ENCODE measurements at regions of chr2 and their contacts with region 1.

Region 1: GRCh38 chr2:16608661-16609643 is 56.7 kb downstream of the CYRIA start:
- DNase-seq: peak; percentile 74 to 79
- ATAC-seq: peak; percentile 91 to 96
- H3K4me3 ChIP-seq: peak overlapping the region; percentile 48
- H3K27ac ChIP-seq: peak overlapping the region; percentile 37 to 57; a peak in 3 of 6 replicates
- H3K4me1 ChIP-seq: no peaks in the 10 kb centered on the region
- CTCF ChIP-seq: peak; percentile 68
- EP300 ChIP-seq: no peak
- POLR2A ChIP-seq: no peak
- RAD21 ChIP-seq: peak; percentile 72 to 84

Region 2: DNA sequence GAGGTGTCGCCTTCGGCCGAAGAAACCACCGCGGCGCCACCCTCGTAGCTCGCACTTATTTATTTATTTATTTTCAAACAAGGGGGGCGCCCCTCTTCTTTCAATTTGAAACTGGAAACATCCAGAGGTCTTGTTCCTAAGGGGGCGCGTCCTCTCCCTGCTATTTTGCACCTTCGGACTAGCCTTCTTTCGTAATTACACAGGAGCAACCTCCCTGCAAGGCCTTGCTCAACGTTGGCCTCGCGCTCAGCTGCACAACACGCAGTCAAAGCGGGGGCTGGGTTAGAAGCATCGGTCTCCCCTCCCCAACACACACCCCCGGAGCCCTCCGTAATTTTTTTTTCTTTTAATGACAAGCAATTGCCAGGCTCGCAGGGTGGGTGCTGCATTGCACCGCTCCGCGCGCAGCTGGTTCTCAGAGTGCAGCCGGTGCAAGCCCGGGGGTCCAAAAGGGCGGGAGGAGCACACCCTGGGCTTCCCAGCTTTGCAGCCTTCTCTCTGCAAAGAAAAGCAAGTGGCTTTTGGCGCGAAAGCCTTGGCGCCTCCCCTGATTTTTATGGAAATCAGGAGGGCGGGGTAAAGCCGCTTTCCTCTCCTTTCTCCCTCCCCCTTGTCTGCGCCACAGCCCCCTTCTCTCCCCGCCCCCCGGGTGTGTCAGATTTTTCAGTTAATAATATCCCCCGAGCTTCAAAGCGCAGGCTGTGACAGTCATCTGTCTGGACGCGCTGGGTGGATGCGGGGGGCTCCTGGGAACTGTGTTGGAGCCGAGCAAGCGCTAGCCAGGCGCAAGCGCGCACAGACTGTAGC is 668.9 kb before region 1 on chr2 and contains the start of gene MYCN:
- CTCF ChIA-PET with region 1: interaction called, 13 read pairs
- POLR2A ChIA-PET with region 1: no interaction called
- DNase-seq: peak; percentile 44 to 72
- ATAC-seq: peak; percentile 46 to 61
- H3K4me3 ChIP-seq: peak within 1 kb of the TSS; percentile 37
- H3K27ac ChIP-seq: no peak within 1 kb of the TSS
- H3K4me1 ChIP-seq: peaks cover 24% of the 10 kb centered on the region
- CTCF ChIP-seq: peak; percentile 88
- EP300 ChIP-seq: no peak
- POLR2A ChIP-seq: no peak
- RAD21 ChIP-seq: peak; percentile 88 to 95
- polyA plus RNA-seq, gene MYCN: not detected in 2 replicates

Region 3: GRCh38 chr2:16454621-16455020 is 154.3 kb before region 1 on chr2:
- CTCF ChIA-PET with region 1: no interaction called
- POLR2A ChIA-PET with region 1: no interaction called
- DNase-seq: no peak
- ATAC-seq: no peak
- H3K4me3 ChIP-seq: no peak overlapping the region
- H3K27ac ChIP-seq: no peak overlapping the region
- H3K4me1 ChIP-seq: no peaks in the 10 kb centered on the region
- CTCF ChIP-seq: no peak
- EP300 ChIP-seq: no peak
- POLR2A ChIP-seq: no peak
- RAD21 ChIP-seq: no peak

Region 4: GRCh38 chr2:16581241-16581640 is 27.7 kb before region 1 on chr2:
- CTCF ChIA-PET with region 1: interaction called, 11 read pairs
- POLR2A ChIA-PET with region 1: no interaction called
- DNase-seq: no peak
- ATAC-seq: no peak
- H3K4me3 ChIP-seq: no peak overlapping the region
- H3K27ac ChIP-seq: no peak overlapping the region
- H3K4me1 ChIP-seq: no peaks in the 10 kb centered on the region
- CTCF ChIP-seq: no peak
- EP300 ChIP-seq: no peak
- POLR2A ChIP-seq: no peak
- RAD21 ChIP-seq: no peak

Region 5: GRCh38 chr2:16623031-16623430 is 14.1 kb after region 1 on chr2:
- CTCF ChIA-PET with region 1: interaction called, 19 read pairs
- POLR2A ChIA-PET with region 1: no interaction called
- DNase-seq: no peak
- ATAC-seq: no peak
- H3K4me3 ChIP-seq: no peak overlapping the region
- H3K27ac ChIP-seq: no peak overlapping the region
- H3K4me1 ChIP-seq: no peaks in the 10 kb centered on the region
- CTCF ChIP-seq: no peak
- EP300 ChIP-seq: no peak
- POLR2A ChIP-seq: no peak
- RAD21 ChIP-seq: no peak

Region 6: GRCh38 chr2:16628314-16628713 is 19.4 kb after region 1 on chr2:
- CTCF ChIA-PET with region 1: interaction called, 19 read pairs
- POLR2A ChIA-PET with region 1: no interaction called
- DNase-seq: no peak
- ATAC-seq: no peak
- H3K4me3 ChIP-seq: no peak overlapping the region
- H3K27ac ChIP-seq: no peak overlapping the region
- H3K4me1 ChIP-seq: no peaks in the 10 kb centered on the region
- CTCF ChIP-seq: no peak
- EP300 ChIP-seq: no peak
- POLR2A ChIP-seq: no peak
- RAD21 ChIP-seq: no peak

Region 7: GRCh38 chr2:16656784-16657391 is 47.9 kb after region 1 on chr2:
- CTCF ChIA-PET with region 1: interaction called, 10 read pairs
- POLR2A ChIA-PET with region 1: no interaction called
- DNase-seq: no peak
- ATAC-seq: 0 out of 6 replicates have a peak, but pooled peaks of 1 of the 2 experiments have one; percentile 23
- H3K4me3 ChIP-seq: no peak overlapping the region
- H3K27ac ChIP-seq: no peak overlapping the region
- H3K4me1 ChIP-seq: no peaks in the 10 kb centered on the region
- CTCF ChIP-seq: no peak
- EP300 ChIP-seq: no peak
- POLR2A ChIP-seq: no peak
- RAD21 ChIP-seq: no peak

Region 8: GRCh38 chr2:16756831-16757644 is 148.1 kb after region 1 on chr2:
- CTCF ChIA-PET with region 1: interaction called, 93 read pairs
- POLR2A ChIA-PET with region 1: interaction called, 3 read pairs
- DNase-seq: peak; percentile 65 to 68
- ATAC-seq: peak; percentile 89 to 98
- H3K4me3 ChIP-seq: no peak overlapping the region
- H3K27ac ChIP-seq: no peak overlapping the region
- H3K4me1 ChIP-seq: no peaks in the 10 kb centered on the region
- CTCF ChIP-seq: peak; percentile 95
- EP300 ChIP-seq: no peak
- POLR2A ChIP-seq: no peak
- RAD21 ChIP-seq: peak; percentile 91 to 96

Region 9: GRCh38 chr2:16925145-16925544 is 316.2 kb after region 1 on chr2:
- CTCF ChIA-PET with region 1: no interaction called
- POLR2A ChIA-PET with region 1: no interaction called
- DNase-seq: no peak
- ATAC-seq: no peak
- H3K4me3 ChIP-seq: no peak overlapping the region
- H3K27ac ChIP-seq: no peak overlapping the region
- H3K4me1 ChIP-seq: no peaks in the 10 kb centered on the region
- CTCF ChIP-seq: no peak
- EP300 ChIP-seq: no peak
- POLR2A ChIP-seq: no peak
- RAD21 ChIP-seq: no peak

Measured in A549 (cell line).